Mammary epithelial cell (primary cell): ENCODE measurements at regions of chr1 and their contacts with region 1.

Region 1: GRCh38 chr1:158124999-158125398 is 55.7 kb upstream of the CD1D start:
- DNase-seq: peak; percentile 89
- H3K4me3 ChIP-seq: no peak overlapping the region
- H3K27ac ChIP-seq: no peak overlapping the region
- H3K4me1 ChIP-seq: peaks cover 18% of the 10 kb centered on the region
- H3K27me3 ChIP-seq: no peaks in the 10 kb centered on the region
- CTCF ChIP-seq: peak; percentile 92 to 98

Region 2: GRCh38 chr1:157369808-157370521 is 755.0 kb before region 1 on chr1:
- CTCF ChIA-PET with region 1: no interaction called
- dilution Hi-C with region 1: no loop called
- in situ Hi-C with region 1: no loop called
- intact Hi-C with region 1: loop called (anchors 5 kb)
- DNase-seq: peak; percentile 50
- H3K4me3 ChIP-seq: no peak overlapping the region
- H3K27ac ChIP-seq: no peak overlapping the region
- H3K4me1 ChIP-seq: no peaks in the 10 kb centered on the region
- H3K27me3 ChIP-seq: no peaks in the 10 kb centered on the region
- CTCF ChIP-seq: peak; percentile 83 to 91

Region 3: GRCh38 chr1:157878059-157878458 is 246.9 kb before region 1 on chr1:
- CTCF ChIA-PET with region 1: interaction called, 11 read pairs
- dilution Hi-C with region 1: no loop called
- in situ Hi-C with region 1: loop called in 1 of 2 experiments (anchors 10 kb)
- intact Hi-C with region 1: loop called (anchors 1 kb)
- DNase-seq: peak; percentile 35
- H3K4me3 ChIP-seq: no peak overlapping the region
- H3K27ac ChIP-seq: no peak overlapping the region
- H3K4me1 ChIP-seq: no peaks in the 10 kb centered on the region
- H3K27me3 ChIP-seq: peaks cover 3% of the 10 kb centered on the region
- CTCF ChIP-seq: peak; percentile 32 to 64

Region 4: DNA sequence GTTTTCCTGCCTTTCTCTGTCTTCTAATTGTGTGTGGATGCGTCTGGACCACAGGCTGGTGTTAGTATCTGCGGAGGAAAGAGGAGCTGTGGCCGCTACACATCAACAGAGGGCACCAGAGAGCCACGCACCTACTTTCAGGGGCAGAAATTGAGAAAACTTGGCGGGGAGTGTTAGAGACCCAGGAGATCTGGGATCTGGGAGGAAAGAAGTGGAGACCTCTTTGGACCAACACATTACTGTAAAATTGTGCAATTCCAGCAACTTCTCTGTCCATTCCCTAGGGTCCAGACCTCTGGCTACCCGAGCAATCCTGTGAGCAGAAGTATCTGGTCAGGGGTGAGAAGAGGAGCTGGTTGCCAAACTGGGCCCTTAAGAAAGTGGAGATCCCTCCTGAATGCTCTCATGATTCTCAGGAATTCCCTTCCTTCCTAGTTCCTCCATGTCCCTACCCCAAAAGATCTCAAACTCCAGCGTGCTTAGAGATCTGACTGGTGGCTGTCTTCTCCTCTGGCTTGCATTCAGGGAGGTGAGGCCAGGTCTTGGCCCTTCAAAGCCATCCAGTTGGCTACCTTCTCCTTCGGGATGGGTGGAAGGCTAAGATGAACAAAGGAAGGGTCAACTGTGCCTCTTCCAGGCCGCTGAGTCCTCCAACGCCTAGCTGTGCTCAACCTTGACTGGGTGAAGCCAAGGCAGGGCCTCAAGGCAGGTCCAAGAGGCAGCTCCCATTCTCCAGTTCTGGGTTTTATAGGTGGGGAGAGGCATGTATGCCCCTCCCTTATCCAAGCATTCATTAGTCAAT is 132.8 kb before region 1 on chr1:
- CTCF ChIA-PET with region 1: interaction called, 36 read pairs
- dilution Hi-C with region 1: no loop called
- in situ Hi-C with region 1: no loop called
- intact Hi-C with region 1: loop called (anchors 1 kb)
- DNase-seq: peak; percentile 55
- H3K4me3 ChIP-seq: no peak overlapping the region
- H3K27ac ChIP-seq: no peak overlapping the region
- H3K4me1 ChIP-seq: peaks cover 16% of the 10 kb centered on the region
- H3K27me3 ChIP-seq: no peaks in the 10 kb centered on the region
- CTCF ChIP-seq: peak; percentile 99

Region 5: DNA sequence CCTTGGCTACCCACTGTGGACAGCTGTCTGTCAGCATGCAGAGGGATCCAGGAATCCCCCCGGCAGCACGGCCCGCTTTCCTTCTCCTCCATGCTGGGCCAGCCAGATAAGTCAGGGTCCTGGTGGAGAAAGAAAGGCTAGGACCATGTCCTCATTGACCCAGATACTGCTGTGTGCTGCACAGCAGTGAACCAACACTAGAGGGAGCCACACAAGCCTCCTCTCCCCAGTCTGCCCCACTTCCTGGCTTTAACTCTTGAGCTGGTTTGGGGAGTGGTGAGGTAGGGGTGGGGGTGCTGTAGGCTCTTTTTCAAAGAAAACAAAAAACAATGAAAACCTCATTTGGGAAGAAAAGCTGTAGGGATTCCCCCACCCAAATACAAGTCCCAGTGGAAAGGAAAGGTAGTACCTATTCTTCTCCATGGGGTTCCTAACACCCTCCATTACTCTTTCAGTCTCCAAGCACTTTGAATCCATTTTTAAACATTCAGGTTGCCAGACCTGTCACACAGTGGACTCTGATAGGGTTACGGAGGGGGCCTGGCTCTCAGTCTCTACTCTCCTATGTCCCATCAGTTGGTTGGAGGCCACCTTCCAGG is 29.2 kb before region 1 on chr1:
- CTCF ChIA-PET with region 1: interaction called, 5 read pairs
- dilution Hi-C with region 1: no loop called
- in situ Hi-C with region 1: no loop called
- intact Hi-C with region 1: loop called (anchors 1 kb)
- DNase-seq: no peak
- H3K4me3 ChIP-seq: no peak overlapping the region
- H3K27ac ChIP-seq: no peak overlapping the region
- H3K4me1 ChIP-seq: peaks cover under 1% of the 10 kb centered on the region
- H3K27me3 ChIP-seq: no peaks in the 10 kb centered on the region
- CTCF ChIP-seq: peak; percentile 78 to 91

Region 6: DNA sequence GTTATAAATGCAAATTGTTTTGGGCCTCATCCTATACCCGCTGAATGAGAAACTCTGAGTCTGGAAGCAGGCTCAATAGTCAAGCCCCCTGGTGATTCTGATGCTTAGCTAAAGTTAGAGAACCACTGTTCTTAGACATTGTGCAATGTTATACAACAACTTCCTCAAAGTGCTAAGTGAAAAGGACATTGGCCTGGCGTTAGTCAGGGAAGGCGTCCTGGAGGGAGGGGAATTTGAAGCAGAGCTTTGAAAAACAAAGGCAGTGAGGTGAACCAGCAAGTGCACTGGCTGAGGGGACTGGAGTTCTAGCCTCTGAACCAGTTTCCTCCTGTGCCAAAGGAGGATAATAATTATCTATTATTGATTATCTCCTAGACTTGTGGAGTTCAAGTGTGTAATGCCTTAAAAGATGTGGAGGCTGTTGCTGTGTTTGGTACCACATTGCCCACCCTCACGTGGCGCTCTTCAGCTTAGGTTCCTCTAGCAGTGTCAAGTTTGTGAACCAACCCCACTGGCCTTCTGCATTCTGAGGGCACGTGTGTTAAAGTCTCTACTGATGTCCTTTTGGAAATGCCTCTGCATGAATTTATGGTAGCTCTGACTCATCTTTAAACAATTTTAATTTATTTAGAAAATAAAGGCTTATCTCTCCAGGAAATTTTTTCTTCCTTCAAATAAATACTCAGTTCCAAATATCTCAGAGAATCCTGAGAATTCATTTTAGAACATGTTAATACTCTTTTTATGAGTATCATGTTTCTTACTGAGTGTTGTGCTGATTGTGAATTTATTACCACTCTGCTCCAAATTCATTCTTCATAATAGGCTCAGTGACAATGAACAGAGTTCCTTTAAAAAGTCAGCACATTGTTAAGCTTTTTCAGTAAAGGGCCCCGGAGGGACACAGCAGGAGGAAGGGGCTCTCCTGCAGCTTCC is 61.0 kb after region 1 on chr1:
- CTCF ChIA-PET with region 1: no interaction called
- dilution Hi-C with region 1: no loop called
- in situ Hi-C with region 1: no loop called
- intact Hi-C with region 1: no loop called
- DNase-seq: no peak
- H3K4me3 ChIP-seq: no peak overlapping the region
- H3K27ac ChIP-seq: no peak overlapping the region
- H3K4me1 ChIP-seq: peaks cover 6% of the 10 kb centered on the region
- H3K27me3 ChIP-seq: no peaks in the 10 kb centered on the region
- CTCF ChIP-seq: no peak

Region 7: GRCh38 chr1:159071970-159072582 is 947.1 kb after region 1 on chr1:
- CTCF ChIA-PET with region 1: no interaction called
- dilution Hi-C with region 1: no loop called
- in situ Hi-C with region 1: no loop called
- intact Hi-C with region 1: loop called (anchors 10 kb)
- DNase-seq: peak; percentile 46
- H3K4me3 ChIP-seq: no peak overlapping the region
- H3K27ac ChIP-seq: no peak overlapping the region
- H3K4me1 ChIP-seq: no peaks in the 10 kb centered on the region
- H3K27me3 ChIP-seq: no peaks in the 10 kb centered on the region
- CTCF ChIP-seq: peak; percentile 67